CD4-positive, alpha-beta memory T cell (primary cell): ENCODE measurements at regions of chr6 and their contacts with region 1.

Region 1: GRCh38 chr6:32971581-32972352 is 3.4 kb downstream of the BRD2 start:
- DNase-seq: peak; percentile 100
- H3K4me3 ChIP-seq: peak overlapping the region; percentile 90 to 95
- H3K4me3 Mint-ChIP-seq: peak overlapping the region; percentile 91 to 99 (median 95)
- H3K27ac ChIP-seq: peak overlapping the region; percentile 95
- H3K27ac Mint-ChIP-seq: peak overlapping the region; percentile 99 to 100 (median 100)
- H3K4me1 ChIP-seq: peaks cover 36% of the 10 kb centered on the region
- H3K4me1 Mint-ChIP-seq: peaks cover 26 to 84% (median 33%) of the 10 kb centered on the region in 4 donors
- H3K27me3 ChIP-seq: no peaks in the 10 kb centered on the region
- H3K27me3 Mint-ChIP-seq: no peaks in the 10 kb centered on the region

Region 2: GRCh38 chr6:32177788-32178546 is 793.8 kb before region 1 on chr6 and contains the start of gene RNF5:
- CTCF ChIA-PET with region 1: no interaction called
- POLR2A ChIA-PET with region 1: interaction called, 4 read pairs
- intact Hi-C with region 1: loop called (anchors 5 kb)
- DNase-seq: peak; percentile 96 to 99 (median 98)
- H3K4me3 ChIP-seq: peak within 1 kb of the TSS; percentile 74 to 87
- H3K4me3 Mint-ChIP-seq: peak within 1 kb of the TSS; percentile 92 to 100 (median 96)
- H3K27ac ChIP-seq: peak within 1 kb of the TSS; percentile 91
- H3K27ac Mint-ChIP-seq: peak within 1 kb of the TSS; percentile 97 to 100 (median 99)
- H3K4me1 ChIP-seq: peaks cover 79% of the 10 kb centered on the region
- H3K4me1 Mint-ChIP-seq: peaks cover 50 to 84% (median 66%) of the 10 kb centered on the region in 4 donors
- H3K27me3 ChIP-seq: no peaks in the 10 kb centered on the region
- H3K27me3 Mint-ChIP-seq: no peaks in the 10 kb centered on the region
- total RNA-seq, gene RNF5: 44.2 to 47.7 TPM

Region 3: DNA sequence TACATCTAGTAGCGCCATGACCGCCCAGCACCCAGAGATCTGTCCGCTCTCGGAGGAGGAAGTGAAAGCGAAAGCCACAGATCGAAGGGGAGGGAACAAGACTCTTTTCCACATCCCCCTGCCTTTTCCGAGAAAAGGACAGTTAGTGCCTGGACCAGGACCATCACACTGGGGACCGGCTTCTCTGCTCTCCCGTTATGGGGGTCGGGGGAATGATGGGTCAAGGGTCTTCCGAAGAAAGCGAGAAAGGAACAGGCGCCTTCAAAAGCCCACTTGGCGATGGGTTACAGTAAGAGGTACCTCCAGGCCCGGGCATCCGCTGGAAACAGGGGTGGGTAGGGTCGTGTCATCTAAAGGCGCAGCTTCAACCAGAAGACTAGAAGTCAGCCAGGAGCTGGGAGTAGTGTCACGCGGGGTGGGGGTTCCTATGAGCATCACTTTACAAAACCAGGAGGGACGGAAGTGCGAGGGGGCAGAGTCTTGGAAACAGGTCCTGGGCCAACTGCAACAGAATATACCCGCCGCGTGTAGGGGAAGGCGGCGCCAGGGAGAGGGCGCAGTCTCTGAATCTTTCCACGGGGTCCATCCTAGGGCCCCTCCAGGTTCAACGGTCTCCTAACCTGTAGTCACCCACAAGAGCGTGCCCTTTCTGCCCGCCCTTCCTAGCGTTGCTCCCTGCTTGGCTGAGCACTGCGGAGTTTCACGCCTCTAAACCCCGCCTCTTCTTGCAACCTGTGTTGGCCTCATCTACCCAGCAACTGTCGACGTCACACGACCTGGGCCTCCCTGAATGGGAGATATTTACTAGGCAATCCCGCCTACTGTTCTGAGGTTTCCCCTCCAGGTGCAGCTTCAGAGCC is 127.6 kb before region 1 on chr6 and contains the start of gene PSMB8:
- CTCF ChIA-PET with region 1: interaction called, 23 read pairs
- POLR2A ChIA-PET with region 1: interaction called, 549 read pairs
- intact Hi-C with region 1: loop called (anchors 1 kb)
- DNase-seq: peak; percentile 97 to 100 (median 98)
- H3K4me3 ChIP-seq: peak within 1 kb of the TSS; percentile 89 to 98
- H3K4me3 Mint-ChIP-seq: peak within 1 kb of the TSS; percentile 94 to 100 (median 97)
- H3K27ac ChIP-seq: peak within 1 kb of the TSS; percentile 99
- H3K27ac Mint-ChIP-seq: peak within 1 kb of the TSS; percentile 99 to 100 (median 99)
- H3K4me1 ChIP-seq: peaks cover 81% of the 10 kb centered on the region
- H3K4me1 Mint-ChIP-seq: peaks cover 61 to 98% (median 72%) of the 10 kb centered on the region in 4 donors
- H3K27me3 ChIP-seq: no peaks in the 10 kb centered on the region
- H3K27me3 Mint-ChIP-seq: no peaks in the 10 kb centered on the region
- total RNA-seq, gene PSMB8: 134 to 138 TPM

Region 4: GRCh38 chr6:32933636-32934085 is 38.1 kb before region 1 on chr6:
- CTCF ChIA-PET with region 1: interaction called, 631 read pairs
- POLR2A ChIA-PET with region 1: interaction called, 698 read pairs
- intact Hi-C with region 1: loop called (anchors 1 kb)
- DNase-seq: peak; percentile 67 to 73 (median 70)
- H3K4me3 ChIP-seq: no peak overlapping the region
- H3K4me3 Mint-ChIP-seq: no peak overlapping the region
- H3K27ac ChIP-seq: no peak overlapping the region
- H3K27ac Mint-ChIP-seq: peak overlapping the region in 2 of 7 donors; percentile 4 to 26
- H3K4me1 ChIP-seq: peaks cover 5% of the 10 kb centered on the region
- H3K4me1 Mint-ChIP-seq: peaks cover 0 to 7% (median 5%) of the 10 kb centered on the region in 4 donors
- H3K27me3 ChIP-seq: no peaks in the 10 kb centered on the region
- H3K27me3 Mint-ChIP-seq: no peaks in the 10 kb centered on the region

Region 5: DNA sequence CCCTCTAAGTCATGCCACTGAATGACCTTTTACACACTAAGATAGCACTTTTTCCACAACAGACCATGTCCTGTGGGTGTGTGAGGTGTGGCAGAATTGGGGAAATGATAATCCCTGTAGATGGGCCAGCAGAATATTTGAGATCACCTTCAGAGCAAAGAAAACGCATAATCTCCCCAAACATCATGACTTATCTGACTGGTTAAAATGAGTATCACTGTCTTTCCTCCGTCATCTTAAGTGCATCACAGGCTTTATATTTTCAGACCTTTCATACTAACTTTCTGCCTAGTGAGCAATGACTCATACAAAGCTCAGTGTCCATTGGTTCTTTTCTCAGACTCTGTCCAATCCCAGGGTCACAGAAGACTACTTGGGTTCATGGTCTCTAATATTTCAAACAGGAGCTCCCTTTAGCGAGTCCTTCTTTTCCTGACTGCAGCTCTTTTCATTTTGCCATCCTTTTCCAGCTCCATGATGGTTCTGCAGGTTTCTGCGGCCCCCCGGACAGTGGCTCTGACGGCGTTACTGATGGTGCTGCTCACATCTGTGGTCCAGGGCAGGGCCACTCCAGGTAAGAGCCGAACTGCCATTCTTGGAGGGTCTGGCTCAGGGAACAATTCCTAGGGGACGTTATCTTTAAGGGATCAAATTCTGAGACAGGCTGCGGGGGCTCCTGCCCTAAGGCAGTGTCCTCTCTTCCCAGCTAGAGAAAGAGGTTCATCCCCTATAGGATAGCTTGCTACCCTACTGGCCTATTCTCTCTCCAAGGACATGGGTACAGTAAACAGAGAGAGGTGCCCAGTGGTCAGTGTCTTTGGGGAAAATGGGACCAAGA is 104.0 kb after region 1 on chr6 and contains the start of gene HLA-DPB1:
- CTCF ChIA-PET with region 1: no interaction called
- POLR2A ChIA-PET with region 1: interaction called, 10 read pairs
- intact Hi-C with region 1: no loop called
- DNase-seq: peak; percentile 56 to 75 (median 64)
- H3K4me3 ChIP-seq: peak within 1 kb of the TSS; percentile 39 to 79
- H3K4me3 Mint-ChIP-seq: peak within 1 kb of the TSS; percentile 70 to 92 (median 87)
- H3K27ac ChIP-seq: peak within 1 kb of the TSS; percentile 76
- H3K27ac Mint-ChIP-seq: peak within 1 kb of the TSS; percentile 34 to 93 (median 87)
- H3K4me1 ChIP-seq: peaks cover 49% of the 10 kb centered on the region
- H3K4me1 Mint-ChIP-seq: peaks cover 28 to 57% (median 38%) of the 10 kb centered on the region in 4 donors
- H3K27me3 ChIP-seq: no peaks in the 10 kb centered on the region
- H3K27me3 Mint-ChIP-seq: peaks cover 2 to 3% of the 10 kb centered on the region in 2 donors
- total RNA-seq, gene HLA-DPB1: 14.5 to 17.2 TPM

Region 6: DNA sequence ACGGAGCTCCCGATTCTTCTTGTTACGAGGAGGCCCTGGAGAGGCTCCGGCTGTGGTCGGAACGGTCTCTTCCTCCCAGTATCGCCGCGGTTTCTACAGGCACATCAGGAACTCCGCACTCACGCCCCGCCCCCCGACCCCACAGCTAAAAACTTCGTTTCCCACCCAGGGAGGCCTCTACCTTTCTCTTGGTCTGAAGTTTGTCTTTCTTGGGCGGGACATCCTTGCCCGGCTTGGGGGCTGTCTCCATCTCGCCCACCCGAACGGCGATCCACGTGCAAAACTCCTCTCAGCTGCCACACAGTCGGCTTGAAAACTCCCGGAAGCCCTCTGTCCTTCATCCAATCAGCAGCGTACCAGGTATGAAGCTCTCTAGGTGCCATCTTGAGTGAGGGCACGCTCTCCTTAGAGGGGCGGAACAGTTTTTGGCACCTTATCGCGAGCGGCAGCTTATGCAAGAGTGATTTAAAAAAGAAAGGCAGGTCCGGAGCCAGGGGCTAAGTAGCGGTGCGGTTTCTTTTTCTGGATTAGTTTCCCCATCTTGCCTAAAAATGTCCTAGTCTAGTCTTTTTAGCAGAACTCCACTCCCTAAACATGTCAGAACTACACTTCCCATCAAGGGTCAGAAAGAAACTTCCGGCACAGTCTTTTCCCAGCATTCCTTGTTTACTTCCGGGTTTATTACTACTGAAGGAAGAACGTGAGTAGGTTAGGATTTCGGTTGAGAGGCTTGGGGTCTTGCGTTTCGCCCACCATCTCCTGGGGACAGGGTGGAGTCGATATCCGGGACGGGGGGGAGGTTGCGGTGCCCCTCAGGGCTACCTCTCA is 317.4 kb after region 1 on chr6 and contains the starts of genes PFDN6 and WDR46:
- CTCF ChIA-PET with region 1: no interaction called
- POLR2A ChIA-PET with region 1: interaction called, 10 read pairs
- intact Hi-C with region 1: no loop called
- DNase-seq: peak; percentile 87 to 92 (median 89)
- H3K4me3 ChIP-seq: peak within 1 kb of the TSS; percentile 73 to 84
- H3K4me3 Mint-ChIP-seq: peak within 1 kb of the TSS; percentile 96 to 100 (median 98)
- H3K27ac ChIP-seq: peak within 1 kb of the TSS; percentile 71
- H3K27ac Mint-ChIP-seq: peak within 1 kb of the TSS; percentile 79 to 98 (median 95)
- H3K4me1 ChIP-seq: peaks cover 30% of the 10 kb centered on the region
- H3K4me1 Mint-ChIP-seq: peaks cover 24 to 48% (median 36%) of the 10 kb centered on the region in 4 donors
- H3K27me3 ChIP-seq: no peaks in the 10 kb centered on the region
- H3K27me3 Mint-ChIP-seq: no peaks in the 10 kb centered on the region
- total RNA-seq, gene PFDN6: 43.6 to 45.5 TPM
- total RNA-seq, gene WDR46: 60.8 to 66.1 TPM

Region 7: GRCh38 chr6:34236131-34236996 is 1264.6 kb after region 1 on chr6 and contains the start of gene HMGA1:
- CTCF ChIA-PET with region 1: no interaction called
- POLR2A ChIA-PET with region 1: interaction called, 3 read pairs
- intact Hi-C with region 1: loop called (anchors 5 kb)
- DNase-seq: peak; percentile 83 to 92 (median 85)
- H3K4me3 ChIP-seq: peak within 1 kb of the TSS; percentile 57 to 79
- H3K4me3 Mint-ChIP-seq: peak within 1 kb of the TSS; percentile 91 to 99 (median 94)
- H3K27ac ChIP-seq: peak within 1 kb of the TSS; percentile 97
- H3K27ac Mint-ChIP-seq: peak within 1 kb of the TSS; percentile 97 to 100 (median 99)
- H3K4me1 ChIP-seq: peaks cover 28% of the 10 kb centered on the region
- H3K4me1 Mint-ChIP-seq: peaks cover 14 to 48% (median 28%) of the 10 kb centered on the region in 4 donors
- H3K27me3 ChIP-seq: no peaks in the 10 kb centered on the region
- H3K27me3 Mint-ChIP-seq: no peaks in the 10 kb centered on the region
- total RNA-seq, gene HMGA1: 74.7 to 77.5 TPM